Spleen (tissue), 13 donors: ENCODE measurements at regions of chr9 and their contacts with region 1.

Region 1: DNA sequence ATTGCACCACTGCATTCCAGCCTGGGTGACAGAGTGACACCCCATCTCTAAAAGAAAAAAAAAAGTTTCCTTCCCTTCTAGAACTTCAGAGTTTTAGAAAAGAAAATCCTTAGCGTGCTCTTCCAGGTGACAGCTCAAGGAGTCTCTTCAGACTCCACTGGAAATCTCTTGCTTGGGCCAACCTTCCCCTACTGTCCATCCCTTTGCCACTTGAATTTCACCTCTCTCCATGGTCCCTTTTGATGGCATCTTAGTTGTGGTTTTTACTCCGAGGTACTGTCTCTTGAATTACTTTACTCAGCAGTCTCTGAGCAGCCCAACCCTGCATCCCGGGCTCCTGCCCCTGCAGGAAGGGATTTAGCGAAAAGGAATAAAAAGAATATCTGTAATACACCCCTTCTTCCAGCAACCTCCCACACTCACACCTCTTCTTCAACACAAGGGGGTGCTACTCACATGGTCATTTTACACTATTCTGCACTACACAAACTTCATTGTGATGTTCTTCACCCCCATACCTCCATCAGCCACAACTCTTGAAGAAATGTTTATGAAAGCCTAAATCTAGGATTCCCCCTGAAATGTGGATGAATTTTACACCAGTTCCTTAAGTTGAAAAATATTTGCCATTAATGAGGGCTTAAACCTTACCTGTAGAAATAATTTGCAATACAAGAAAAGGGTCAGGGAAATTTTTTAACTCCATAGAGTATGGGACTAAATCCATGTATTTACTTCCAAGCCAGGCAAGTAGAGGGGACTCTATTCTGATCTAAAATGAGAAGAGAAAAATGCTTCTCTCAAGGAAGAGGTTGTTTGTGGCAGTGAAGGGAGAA is 25.9 kb downstream of the TPD52L3 start:
- DNase-seq: no peak
- H3K4me3 ChIP-seq: no peak overlapping the region
- H3K27ac ChIP-seq: no peak overlapping the region
- H3K4me1 ChIP-seq: no peaks in the 10 kb centered on the region
- H3K27me3 ChIP-seq: peaks cover 0 to 6% (median 0%) of the 10 kb centered on the region in 7 donors
- CTCF ChIP-seq: peak; percentile 63 to 83 (median 79)
- POLR2A ChIP-seq: no peak

Region 2: DNA sequence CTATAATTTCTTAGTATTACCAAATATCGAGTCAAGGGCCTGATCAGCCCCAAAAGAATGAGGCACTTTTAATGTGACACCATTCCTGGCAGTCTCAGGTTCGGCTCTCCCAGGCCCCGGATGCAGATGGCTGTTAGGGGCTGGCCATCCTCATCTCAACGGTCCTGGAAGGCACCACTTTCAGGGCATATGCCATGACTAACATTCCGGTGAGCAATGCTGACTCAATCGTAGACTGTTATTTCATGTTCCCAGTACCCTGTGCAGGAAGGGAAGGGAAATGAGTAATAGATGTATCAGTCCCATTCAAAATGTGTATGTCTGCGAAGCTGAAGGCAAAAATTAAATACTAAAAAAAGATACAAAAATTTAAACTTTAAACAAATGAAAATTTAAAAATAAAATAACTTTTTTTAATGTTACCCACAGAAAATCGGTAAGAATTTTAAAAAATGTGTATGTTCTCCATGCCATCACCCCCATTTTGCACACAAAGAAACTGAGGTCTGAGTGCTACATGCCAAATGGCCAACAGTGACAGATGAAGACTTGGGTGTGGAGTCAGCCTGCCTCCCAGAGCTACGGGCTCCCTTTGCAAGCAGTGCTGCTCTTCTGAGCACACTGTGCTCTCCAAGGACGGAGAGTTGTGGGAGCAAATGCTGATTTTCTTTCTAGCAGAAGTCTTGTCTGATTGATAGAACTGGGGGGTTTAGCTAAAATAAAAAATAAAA is 212.5 kb after region 1 on chr9:
- intact Hi-C with region 1: loop called (anchors 5 kb)
- DNase-seq: no peak
- H3K4me3 ChIP-seq: no peak overlapping the region
- H3K27ac ChIP-seq: no peak overlapping the region
- H3K4me1 ChIP-seq: no peaks in the 10 kb centered on the region
- H3K27me3 ChIP-seq: peaks cover 0 to 16% (median 0%) of the 10 kb centered on the region in 7 donors
- CTCF ChIP-seq: no peak
- POLR2A ChIP-seq: no peak

Region 3: DNA sequence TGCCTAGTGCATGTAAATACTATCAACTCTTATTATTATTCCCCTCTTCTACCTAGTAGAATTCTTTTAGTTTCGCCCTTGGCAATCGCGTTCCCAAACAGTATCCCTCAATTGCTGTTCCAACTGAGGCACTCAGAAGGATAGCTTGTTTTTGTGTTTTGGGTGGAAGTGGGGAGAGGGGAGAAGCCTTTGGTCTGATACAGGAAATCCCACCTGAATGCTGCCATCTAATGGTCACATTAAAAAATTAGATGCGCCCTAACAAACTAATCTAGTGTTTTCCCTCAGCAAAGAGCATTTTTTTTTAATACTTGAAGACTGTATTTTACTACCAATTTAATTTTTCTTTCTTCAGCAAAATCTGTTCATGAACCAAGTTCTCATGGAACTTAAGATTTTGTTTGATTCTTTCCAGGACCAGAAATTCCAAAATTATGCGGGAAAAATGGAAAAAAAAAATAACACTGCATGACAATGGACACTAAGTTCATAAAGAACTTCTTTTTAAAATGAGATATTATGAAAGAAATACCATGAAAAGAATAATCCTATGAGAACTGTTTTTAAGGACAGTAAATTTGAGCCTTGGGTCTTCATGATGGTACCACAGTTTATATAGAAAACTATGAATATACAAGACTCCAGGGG is 313.7 kb after region 1 on chr9:
- intact Hi-C with region 1: loop called (anchors 5 kb)
- DNase-seq: no peak
- H3K4me3 ChIP-seq: no peak overlapping the region
- H3K27ac ChIP-seq: no peak overlapping the region
- H3K4me1 ChIP-seq: peaks cover 0 to 6% (median 0%) of the 10 kb centered on the region in 6 donors
- H3K27me3 ChIP-seq: no peaks in the 10 kb centered on the region
- CTCF ChIP-seq: peak in 9 of 11 experiments; percentile 12 to 56 (median 42)
- POLR2A ChIP-seq: no peak